CD4-positive, alpha-beta T cell (primary cell): ENCODE measurements at regions of chr14 and their contacts with region 1.

Region 1: GRCh38 chr14:67467179-67468080 is 21.1 kb downstream of the TMEM229B start:
- DNase-seq: no peak
- ATAC-seq: no peak
- H3K4me3 ChIP-seq: no peak overlapping the region
- H3K4me3 Mint-ChIP-seq: no peak overlapping the region
- H3K27ac ChIP-seq: no peak overlapping the region
- H3K27ac Mint-ChIP-seq: peak overlapping the region; percentile 34
- H3K4me1 ChIP-seq: peaks cover 27% of the 10 kb centered on the region
- H3K4me1 Mint-ChIP-seq: peaks cover 31% of the 10 kb centered on the region
- H3K27me3 ChIP-seq: no peaks in the 10 kb centered on the region
- H3K27me3 Mint-ChIP-seq: no peaks in the 10 kb centered on the region
- CTCF ChIP-seq: no peak

Region 2: GRCh38 chr14:67487937-67488893 is 20.8 kb after region 1 on chr14 and contains the start of gene TMEM229B:
- CTCF ChIA-PET with region 1: no interaction called
- POLR2A ChIA-PET with region 1: interaction called, 3 read pairs
- intact Hi-C with region 1: loop called in 1 of 2 experiments (anchors 1 kb)
- DNase-seq: peak; percentile 50 to 94 (median 69)
- ATAC-seq: peak; percentile 98
- H3K4me3 ChIP-seq: peak within 1 kb of the TSS; percentile 66
- H3K4me3 Mint-ChIP-seq: peak within 1 kb of the TSS; percentile 99
- H3K27ac ChIP-seq: peak within 1 kb of the TSS; percentile 68 to 84
- H3K27ac Mint-ChIP-seq: peak within 1 kb of the TSS; percentile 100
- H3K4me1 ChIP-seq: peaks cover 52% of the 10 kb centered on the region
- H3K4me1 Mint-ChIP-seq: peaks cover 61% of the 10 kb centered on the region
- H3K27me3 ChIP-seq: no peaks in the 10 kb centered on the region
- H3K27me3 Mint-ChIP-seq: no peaks in the 10 kb centered on the region
- CTCF ChIP-seq: no peak
- total RNA-seq, gene TMEM229B: 7.1 to 9.1 TPM

Region 3: DNA sequence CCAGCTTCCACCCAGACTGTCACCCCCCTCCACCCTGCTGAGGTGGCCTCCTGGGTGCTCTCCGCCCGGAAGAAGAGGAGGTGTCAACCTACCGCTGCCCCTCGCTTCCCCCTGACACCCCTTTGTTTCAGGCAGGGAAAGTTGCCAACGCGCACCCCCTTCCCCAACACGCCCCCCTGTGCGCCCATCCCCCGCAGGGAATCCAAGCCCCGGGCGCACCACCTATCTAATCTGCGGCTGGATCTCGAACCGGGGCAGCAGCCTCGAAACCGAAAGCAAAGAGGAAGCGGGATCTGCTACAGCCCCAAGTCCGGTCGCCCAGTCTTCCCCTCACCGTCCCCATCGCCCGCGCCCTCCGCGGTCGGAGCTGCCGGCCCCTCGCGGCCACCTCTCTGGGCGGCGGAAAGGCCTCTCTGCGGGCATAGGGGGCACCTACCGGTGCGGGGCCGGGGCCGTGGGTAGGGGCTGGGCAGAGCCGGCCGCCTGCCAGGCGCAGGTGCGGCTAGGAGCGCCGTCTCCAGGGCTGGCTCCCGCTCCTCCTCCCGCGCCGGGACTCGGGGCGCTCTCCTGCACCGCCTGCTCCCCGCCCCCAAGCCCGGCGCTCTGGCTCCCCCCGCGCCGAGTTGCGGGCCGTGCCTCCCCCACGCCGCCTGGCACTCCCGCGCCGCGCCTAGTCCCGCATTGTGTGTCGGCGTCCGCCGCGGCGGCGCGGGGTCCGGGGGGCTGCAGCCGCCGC is 47.4 kb after region 1 on chr14:
- CTCF ChIA-PET with region 1: no interaction called
- POLR2A ChIA-PET with region 1: interaction called, 3 read pairs
- intact Hi-C with region 1: loop called in 1 of 2 experiments (anchors 10 kb)
- DNase-seq: peak in 12 of 14 experiments; percentile 11 to 70 (median 36)
- ATAC-seq: peak; percentile 77
- H3K4me3 ChIP-seq: peak overlapping the region; percentile 84
- H3K4me3 Mint-ChIP-seq: peak overlapping the region; percentile 90
- H3K27ac ChIP-seq: peak overlapping the region; percentile 58 to 73
- H3K27ac Mint-ChIP-seq: peak overlapping the region; percentile 88
- H3K4me1 ChIP-seq: peaks cover 28% of the 10 kb centered on the region
- H3K4me1 Mint-ChIP-seq: peaks cover 37% of the 10 kb centered on the region
- H3K27me3 ChIP-seq: no peaks in the 10 kb centered on the region
- H3K27me3 Mint-ChIP-seq: no peaks in the 10 kb centered on the region
- CTCF ChIP-seq: no peak